ENCODE measurements at regions of chr15 and their contacts with region 1.

Region 1: DNA sequence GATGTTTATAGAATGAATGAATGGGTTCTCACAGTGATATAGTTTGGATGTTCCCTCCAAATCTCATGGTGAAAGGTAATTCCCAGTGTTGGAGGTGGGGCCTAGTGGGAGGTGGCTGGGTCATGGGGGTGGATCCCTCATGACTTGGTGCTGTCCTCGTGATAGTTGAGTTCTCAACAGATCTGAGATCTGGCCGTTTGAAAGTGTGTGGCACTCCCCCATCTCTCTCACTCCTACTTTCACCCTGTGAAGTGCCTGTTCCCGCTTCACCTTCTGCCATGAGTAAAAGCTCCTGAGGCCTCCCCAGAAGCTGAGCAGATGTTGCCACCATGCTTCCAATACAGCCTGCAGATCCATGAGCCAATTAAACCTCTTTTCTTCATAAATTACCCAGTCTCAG is 170.8 kb upstream of the LINGO1 start:
- DNase-seq: no peak
- ATAC-seq: no peak
- H3K4me3 ChIP-seq: no peak overlapping the region
- H3K27ac ChIP-seq: no peak overlapping the region
- H3K4me1 ChIP-seq: no peaks in the 10 kb centered on the region
- H3K27me3 ChIP-seq: peaks cover 7% of the 10 kb centered on the region; the same call in 1 of the 2 replicates
- CTCF ChIP-seq: no peak

Region 2: GRCh38 chr15:77327844-77328529 is 475.5 kb before region 1 on chr15:
- CTCF ChIA-PET with region 1: no interaction called
- POLR2A ChIA-PET with region 1: interaction called, 17 read pairs
- intact Hi-C with region 1: no loop called
- DNase-seq: no peak
- ATAC-seq: no peak
- H3K4me3 ChIP-seq: no peak overlapping the region
- H3K27ac ChIP-seq: no peak overlapping the region
- H3K4me1 ChIP-seq: no peaks in the 10 kb centered on the region
- H3K27me3 ChIP-seq: no peaks in the 10 kb centered on the region
- CTCF ChIP-seq: no peak

Region 3: GRCh38 chr15:77836121-77836692 is 32.7 kb after region 1 on chr15:
- CTCF ChIA-PET with region 1: no interaction called
- POLR2A ChIA-PET with region 1: no interaction called
- intact Hi-C with region 1: no loop called
- DNase-seq: peak; percentile 7
- ATAC-seq: no peak
- H3K4me3 ChIP-seq: no peak overlapping the region
- H3K27ac ChIP-seq: no peak overlapping the region
- H3K4me1 ChIP-seq: peaks cover 5% of the 10 kb centered on the region
- H3K27me3 ChIP-seq: peaks cover 17% of the 10 kb centered on the region
- CTCF ChIP-seq: no peak

Measured in PC-3 (cell line).